H1 (cell line): ENCODE measurements at regions of chr17 and their contacts with region 1.

Region 1: DNA sequence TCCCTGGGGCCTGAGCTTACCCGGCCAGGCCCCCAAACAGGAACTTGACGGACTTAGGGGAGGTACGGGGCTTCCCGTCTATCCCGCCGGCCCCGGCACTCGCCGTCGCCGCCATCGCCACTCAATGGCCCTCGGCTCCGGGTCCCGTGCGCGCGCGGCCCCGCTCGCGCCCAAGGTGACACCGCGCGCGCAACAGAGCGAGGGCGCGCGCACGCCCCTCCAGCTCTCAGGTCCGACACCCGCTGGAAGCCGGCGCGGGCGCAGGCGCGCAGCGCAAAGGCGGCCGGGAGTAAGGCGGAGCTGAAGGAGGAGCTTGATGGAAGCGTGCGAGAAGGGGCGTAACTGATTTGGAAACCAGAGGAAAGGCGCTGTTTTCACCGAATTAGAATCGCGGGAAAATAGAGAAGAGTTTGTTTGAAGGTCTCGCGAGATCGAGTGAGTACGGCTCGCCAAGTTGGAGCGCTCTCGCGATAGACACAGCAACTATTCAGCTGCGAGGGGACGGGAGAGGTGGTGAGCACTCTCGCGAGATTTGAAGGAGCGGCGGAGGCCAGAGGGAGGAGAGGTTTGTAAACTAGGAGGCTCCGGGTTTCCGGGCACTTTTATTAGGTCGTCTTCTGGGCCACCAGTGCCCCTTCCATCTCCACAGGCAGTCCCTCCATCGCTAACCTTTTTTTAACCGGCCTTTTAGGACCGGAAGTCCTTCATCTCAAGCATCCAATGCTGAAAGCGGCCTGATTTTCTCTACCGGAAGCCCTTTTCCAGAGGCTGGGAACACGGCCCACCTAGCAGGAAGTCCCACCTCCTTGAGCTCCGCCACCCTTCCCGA is at the starts of genes RNF167 and SLC25A11:
- DNase-seq: peak; percentile 91 to 95
- H3K4me3 ChIP-seq: peak within 1 kb of the TSS; percentile 85 to 94 (median 90)
- H3K27ac ChIP-seq: peak within 1 kb of the TSS; percentile 88
- H3K4me1 ChIP-seq: peaks cover 0 to 11% (median 6%) of the 10 kb centered on the region in 4 experiments; a peak in 5 of 7 replicates
- H3K27me3 ChIP-seq: no peaks in the 10 kb centered on the region
- CTCF ChIP-seq: no peak
- EP300 ChIP-seq: no peak
- POLR2A ChIP-seq: peak; percentile 76 to 85
- RAD21 ChIP-seq: no peak
- total RNA-seq, gene RNF167: 140 and 147 TPM in 2 replicates
- total RNA-seq, gene SLC25A11: 55.9 and 65.2 TPM in 2 replicates

Region 2: GRCh38 chr17:4903051-4903818 is 36.8 kb before region 1 on chr17 and contains the start of gene CHRNE:
- CTCF ChIA-PET with region 1: interaction called, 8 read pairs
- POLR2A ChIA-PET with region 1: interaction called, 49 read pairs
- DNase-seq: peak in 1 of 2 experiments; percentile 91
- H3K4me3 ChIP-seq: no peak within 1 kb of the TSS
- H3K27ac ChIP-seq: no peak within 1 kb of the TSS
- H3K4me1 ChIP-seq: peaks cover 3 to 14% (median 4%) of the 10 kb centered on the region in 4 experiments; a peak in 6 of 7 replicates
- H3K27me3 ChIP-seq: 0 out of 7 replicates have a peak, but pooled peaks cover 0 to 2% (median 0%) of the 10 kb centered on the region in 4 experiments
- CTCF ChIP-seq: peak; percentile 71 to 89 (median 81)
- EP300 ChIP-seq: no peak
- POLR2A ChIP-seq: no peak
- RAD21 ChIP-seq: peak; percentile 64 to 75
- total RNA-seq, gene CHRNE: 0.15 and 0.40 TPM in 2 replicates

Region 3: DNA sequence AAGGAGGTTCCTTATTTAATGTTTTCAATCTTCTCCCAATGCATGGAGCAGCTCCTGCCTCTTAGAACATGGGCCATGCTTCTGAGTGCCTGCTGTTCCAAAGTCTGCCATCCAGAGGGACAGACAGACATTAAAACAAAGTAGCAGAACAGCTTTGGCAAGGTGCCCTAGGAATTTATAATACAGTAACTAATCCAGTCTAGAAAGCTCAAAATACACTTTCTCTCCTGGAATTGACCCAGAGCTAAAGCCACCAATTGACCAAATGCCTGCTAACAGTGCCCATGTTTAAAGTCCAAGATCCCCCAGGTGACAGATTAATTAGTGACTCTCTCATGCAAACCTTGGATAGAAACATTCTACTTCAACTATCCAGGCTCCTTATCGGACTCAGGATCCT is 26.0 kb before region 1 on chr17:
- CTCF ChIA-PET with region 1: interaction called, 26 read pairs
- POLR2A ChIA-PET with region 1: interaction called, 18 read pairs
- DNase-seq: no peak
- H3K4me3 ChIP-seq: no peak overlapping the region
- H3K27ac ChIP-seq: no peak overlapping the region
- H3K4me1 ChIP-seq: peaks cover 0 to under 1% (median 0%) of the 10 kb centered on the region in 4 experiments; a peak in 3 of 7 replicates
- H3K27me3 ChIP-seq: no peaks in the 10 kb centered on the region
- CTCF ChIP-seq: no peak
- EP300 ChIP-seq: no peak
- POLR2A ChIP-seq: no peak
- RAD21 ChIP-seq: no peak

Region 4: DNA sequence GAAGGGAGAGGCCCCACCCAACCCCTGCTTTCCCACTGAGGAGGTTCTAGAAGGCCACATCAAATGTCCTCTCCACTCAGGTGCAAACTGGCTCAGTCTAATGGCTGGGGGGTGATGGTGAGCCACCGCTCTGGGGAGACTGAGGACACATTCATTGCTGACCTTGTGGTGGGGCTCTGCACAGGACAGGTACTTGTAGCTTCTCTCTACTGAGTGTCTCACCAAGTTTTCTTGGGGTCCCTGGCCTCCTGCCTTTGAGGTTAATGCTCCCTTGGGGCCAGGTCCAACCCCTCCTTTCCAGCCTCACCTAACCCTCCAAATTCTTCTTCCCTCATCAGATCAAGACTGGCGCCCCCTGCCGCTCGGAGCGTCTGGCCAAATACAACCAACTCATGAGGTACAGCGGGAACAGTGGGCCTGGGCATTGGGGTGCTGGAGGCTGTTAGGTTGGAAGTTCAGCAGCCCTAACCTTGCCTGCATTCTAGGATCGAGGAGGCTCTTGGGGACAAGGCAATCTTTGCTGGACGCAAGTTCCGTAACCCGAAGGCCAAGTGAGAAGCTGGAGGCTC is 16.6 kb after region 1 on chr17:
- CTCF ChIA-PET with region 1: interaction called, 12 read pairs
- POLR2A ChIA-PET with region 1: interaction called, 987 read pairs
- DNase-seq: peak in 1 of 2 experiments; percentile 93
- H3K4me3 ChIP-seq: no peak overlapping the region
- H3K27ac ChIP-seq: no peak overlapping the region
- H3K4me1 ChIP-seq: peaks cover 0 to 14% (median 8%) of the 10 kb centered on the region in 4 experiments; a peak in 5 of 7 replicates
- H3K27me3 ChIP-seq: no peaks in the 10 kb centered on the region
- CTCF ChIP-seq: peak; percentile 59 to 74 (median 71)
- EP300 ChIP-seq: no peak
- POLR2A ChIP-seq: no peak
- RAD21 ChIP-seq: peak; percentile 25 to 46; a peak in 3 of 4 replicates

Region 5: GRCh38 chr17:4986951-4987766 is 47.1 kb after region 1 on chr17 and contains the start of gene CAMTA2:
- CTCF ChIA-PET with region 1: no interaction called
- POLR2A ChIA-PET with region 1: interaction called, 11 read pairs
- DNase-seq: peak in 1 of 2 experiments; percentile 93
- H3K4me3 ChIP-seq: peak within 1 kb of the TSS; percentile 59 to 85 (median 66)
- H3K27ac ChIP-seq: no peak within 1 kb of the TSS
- H3K4me1 ChIP-seq: peaks cover 0 to 7% (median 4%) of the 10 kb centered on the region in 4 experiments; a peak in 5 of 7 replicates
- H3K27me3 ChIP-seq: peaks cover 0 to 11% (median 9%) of the 10 kb centered on the region in 4 experiments; a peak in 6 of 7 replicates
- CTCF ChIP-seq: peak; percentile 40 to 52 (median 47)
- EP300 ChIP-seq: peak in 1 of 2 experiments; percentile 29; a peak in 1 of 3 replicates
- POLR2A ChIP-seq: no peak
- RAD21 ChIP-seq: peak in 1 of 2 experiments; percentile 27; a peak in 1 of 4 replicates
- total RNA-seq, gene CAMTA2: 11.4 and 12.0 TPM in 2 replicates